PC-9 (cell line): ENCODE measurements at regions of chr6 and their contacts with region 1.

Region 1: DNA sequence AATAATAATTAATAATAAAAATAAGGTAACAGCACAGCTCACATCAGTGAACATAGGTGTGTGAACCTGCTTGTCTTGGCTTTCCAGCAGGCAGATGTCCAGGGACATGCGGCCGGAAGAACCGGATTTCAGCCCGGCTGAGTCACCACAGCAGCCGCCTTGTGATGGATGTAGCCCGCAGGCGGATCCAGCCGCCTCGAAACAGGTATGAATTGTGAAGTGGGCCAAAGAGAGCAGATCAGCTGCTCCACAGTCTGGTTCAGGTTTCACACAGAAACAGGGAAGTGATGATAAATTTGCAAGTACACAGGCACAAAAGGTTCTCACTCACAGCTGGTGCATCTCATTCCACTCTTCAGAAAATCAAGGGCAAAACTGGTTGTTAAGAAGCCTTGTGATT is 55.1 kb downstream of the ID4 start:
- DNase-seq: peak; percentile 96 to 97
- H3K4me3 ChIP-seq: no peak overlapping the region
- H3K27ac ChIP-seq: peak overlapping the region; percentile 82
- H3K4me1 ChIP-seq: peaks cover 34% of the 10 kb centered on the region
- H3K27me3 ChIP-seq: no peaks in the 10 kb centered on the region
- CTCF ChIP-seq: no peak

Region 2: DNA sequence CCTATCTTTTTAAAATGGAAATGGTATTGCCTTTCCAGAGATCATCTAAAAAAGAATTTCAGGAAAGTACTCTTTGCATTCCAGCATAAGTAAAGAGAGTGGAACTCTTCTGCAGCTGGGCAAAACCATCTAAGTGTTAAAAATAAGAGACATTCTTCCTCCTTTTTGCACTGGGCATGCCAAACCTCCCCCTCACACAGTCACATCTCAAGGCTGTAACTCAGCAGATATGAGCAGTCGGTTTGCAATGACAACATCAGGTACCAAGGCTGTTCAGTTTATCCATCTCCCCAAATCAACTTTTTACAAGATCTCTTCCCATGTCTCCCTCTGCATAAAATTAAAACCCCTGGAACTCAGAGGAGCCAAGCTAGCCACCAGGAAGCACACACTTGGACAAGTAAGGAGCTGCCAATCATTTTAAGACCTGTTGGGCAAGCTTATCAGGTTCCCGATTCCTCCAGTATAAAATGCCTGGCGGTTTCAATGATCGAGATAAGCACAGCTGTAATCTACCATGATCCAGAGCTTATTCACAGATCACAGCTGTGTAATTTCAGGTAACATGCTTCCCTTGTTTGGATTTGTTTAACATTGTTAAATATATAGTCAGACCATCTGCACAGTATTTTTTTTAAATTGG is 31.9 kb before region 1 on chr6:
- CTCF ChIA-PET with region 1: no interaction called
- POLR2A ChIA-PET with region 1: no interaction called
- intact Hi-C with region 1: loop called (anchors 1 kb)
- DNase-seq: peak; percentile 64 to 87
- H3K4me3 ChIP-seq: no peak overlapping the region
- H3K27ac ChIP-seq: no peak overlapping the region
- H3K4me1 ChIP-seq: peaks cover 16% of the 10 kb centered on the region
- H3K27me3 ChIP-seq: no peaks in the 10 kb centered on the region
- CTCF ChIP-seq: no peak

Region 3: GRCh38 chr6:19866985-19867627 is 25.2 kb before region 1 on chr6:
- CTCF ChIA-PET with region 1: no interaction called
- POLR2A ChIA-PET with region 1: no interaction called
- intact Hi-C with region 1: loop called (anchors 1 kb)
- DNase-seq: peak; percentile 23 to 87
- H3K4me3 ChIP-seq: no peak overlapping the region
- H3K27ac ChIP-seq: peak overlapping the region; percentile 14; the same call in 1 of the 2 replicates
- H3K4me1 ChIP-seq: peaks cover 12% of the 10 kb centered on the region
- H3K27me3 ChIP-seq: no peaks in the 10 kb centered on the region
- CTCF ChIP-seq: no peak

Region 4: DNA sequence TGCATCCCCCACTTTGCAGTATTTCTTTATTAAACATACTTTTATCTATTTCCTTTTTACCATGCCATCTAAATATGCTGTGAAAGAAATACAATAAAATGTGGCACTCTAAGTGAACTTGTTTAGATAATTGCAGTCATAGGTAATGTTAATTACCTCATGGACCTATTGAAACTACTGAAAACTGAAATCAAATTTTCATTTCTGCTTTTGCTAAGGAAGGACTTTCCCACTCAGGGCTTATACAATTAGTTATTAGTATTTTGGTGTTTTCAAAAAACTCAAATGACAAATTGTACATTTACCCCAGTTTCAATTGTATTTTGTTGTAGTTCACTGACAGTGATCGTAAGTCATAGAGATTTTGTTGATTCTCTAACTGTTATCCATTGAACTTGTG is 33.3 kb after region 1 on chr6:
- CTCF ChIA-PET with region 1: no interaction called
- POLR2A ChIA-PET with region 1: no interaction called
- intact Hi-C with region 1: no loop called
- DNase-seq: no peak
- H3K4me3 ChIP-seq: no peak overlapping the region
- H3K27ac ChIP-seq: no peak overlapping the region
- H3K4me1 ChIP-seq: no peaks in the 10 kb centered on the region
- H3K27me3 ChIP-seq: peaks cover 10% of the 10 kb centered on the region; the same call in 1 of the 2 replicates
- CTCF ChIP-seq: no peak